ENCODE measurements at regions of chr15 and their contacts with region 1.

Region 1: DNA sequence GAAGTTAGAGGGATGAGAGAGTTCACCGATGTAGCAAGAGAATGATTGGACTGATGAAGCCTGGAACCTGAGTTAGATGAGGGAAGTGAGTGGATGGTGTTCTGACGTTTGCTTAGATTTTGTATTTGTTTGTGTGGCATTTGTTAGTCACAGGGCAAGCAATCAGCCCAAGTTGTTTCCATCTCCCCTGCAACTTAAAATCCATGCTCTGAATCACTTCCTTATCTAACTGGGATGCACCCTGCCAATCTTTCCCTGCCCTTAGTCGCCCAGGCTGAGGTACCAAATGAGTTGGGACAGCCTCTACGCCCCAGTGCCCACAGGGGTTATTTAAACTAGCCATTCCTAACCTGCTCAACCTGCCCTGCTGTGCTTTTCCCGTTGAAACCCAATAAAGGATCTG is 12.6 kb downstream of the PAQR5 start:
- DNase-seq: no peak
- ATAC-seq: no peak
- H3K4me3 ChIP-seq: no peak overlapping the region
- H3K4me3 Mint-ChIP-seq: no peak overlapping the region
- H3K27ac ChIP-seq: no peak overlapping the region
- H3K27ac Mint-ChIP-seq: no peak overlapping the region
- H3K4me1 ChIP-seq: no peaks in the 10 kb centered on the region
- H3K4me1 Mint-ChIP-seq: no peaks in the 10 kb centered on the region
- H3K27me3 ChIP-seq: peaks cover 0 to 27% of the 10 kb centered on the region in 2 experiments
- H3K27me3 Mint-ChIP-seq: peaks cover 19 to 24% of the 10 kb centered on the region in 2 donors

Region 2: DNA sequence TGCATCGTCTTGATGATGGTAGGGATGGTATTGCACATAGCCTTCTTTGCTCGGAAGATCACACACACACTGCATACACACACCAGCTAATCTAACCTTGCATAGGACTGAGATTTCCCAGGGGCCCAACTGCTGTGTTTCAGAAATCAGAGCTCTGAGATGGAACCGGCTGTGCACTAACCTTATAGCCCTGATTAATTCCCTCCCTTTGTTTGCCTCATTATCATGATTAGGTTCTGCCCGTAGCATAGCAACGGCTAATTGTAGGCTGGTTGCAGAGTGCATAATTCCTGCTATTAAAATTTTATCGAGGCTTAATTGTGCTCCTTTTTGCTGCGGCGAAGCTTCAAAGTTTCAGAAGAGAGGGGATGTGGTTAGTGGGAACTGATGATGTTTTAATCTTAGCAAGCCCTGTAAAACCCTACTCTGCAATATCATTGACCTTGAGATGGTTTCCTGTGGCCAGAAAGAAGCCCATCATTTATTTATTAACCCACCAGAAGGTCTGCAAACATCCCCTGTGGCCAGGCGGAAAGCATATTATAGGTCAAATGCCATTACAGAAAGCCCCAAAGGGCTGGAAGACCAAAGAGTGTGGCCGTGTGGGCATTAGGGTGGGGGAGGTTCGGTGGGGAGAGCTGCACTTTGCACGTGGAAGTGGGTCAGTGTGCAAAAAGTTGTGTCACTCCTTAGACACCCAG is 207.1 kb before region 1 on chr15:
- CTCF ChIA-PET with region 1: no interaction called
- POLR2A ChIA-PET with region 1: no interaction called
- DNase-seq: peak in 1 of 35 experiments; percentile 14
- ATAC-seq: peak; percentile 40 to 68 (median 52)
- H3K4me3 ChIP-seq: no peak overlapping the region
- H3K4me3 Mint-ChIP-seq: peak overlapping the region in 1 of 3 donors; percentile 21
- H3K27ac ChIP-seq: no peak overlapping the region
- H3K27ac Mint-ChIP-seq: no peak overlapping the region
- H3K4me1 ChIP-seq: peaks cover 0 to 20% of the 10 kb centered on the region in 2 experiments
- H3K4me1 Mint-ChIP-seq: peaks cover 20 to 43% (median 25%) of the 10 kb centered on the region in 3 donors
- H3K27me3 ChIP-seq: no peaks in the 10 kb centered on the region
- H3K27me3 Mint-ChIP-seq: no peaks in the 10 kb centered on the region

Region 3: GRCh38 chr15:69114331-69114928 is 196.9 kb before region 1 on chr15:
- CTCF ChIA-PET with region 1: no interaction called
- POLR2A ChIA-PET with region 1: no interaction called
- DNase-seq: peak in 1 of 35 experiments; percentile 8
- ATAC-seq: peak in 1 of 4 experiments; percentile 23
- H3K4me3 ChIP-seq: no peak overlapping the region
- H3K4me3 Mint-ChIP-seq: peak overlapping the region in 2 of 3 donors; percentile 1 to 68
- H3K27ac ChIP-seq: no peak overlapping the region
- H3K27ac Mint-ChIP-seq: peak overlapping the region in 1 of 2 donors; percentile 19
- H3K4me1 ChIP-seq: peaks cover 0 to 14% of the 10 kb centered on the region in 2 experiments
- H3K4me1 Mint-ChIP-seq: peaks cover 13 to 16% (median 15%) of the 10 kb centered on the region in 3 donors
- H3K27me3 ChIP-seq: peaks cover 0 to 34% of the 10 kb centered on the region in 2 experiments
- H3K27me3 Mint-ChIP-seq: peaks cover 20 to 28% of the 10 kb centered on the region in 2 donors

Region 4: GRCh38 chr15:69225355-69226025 is 85.8 kb before region 1 on chr15:
- CTCF ChIA-PET with region 1: no interaction called
- POLR2A ChIA-PET with region 1: no interaction called
- DNase-seq: peak in 1 of 35 experiments; percentile 8
- ATAC-seq: no peak
- H3K4me3 ChIP-seq: no peak overlapping the region
- H3K4me3 Mint-ChIP-seq: no peak overlapping the region
- H3K27ac ChIP-seq: no peak overlapping the region
- H3K27ac Mint-ChIP-seq: no peak overlapping the region
- H3K4me1 ChIP-seq: no peaks in the 10 kb centered on the region
- H3K4me1 Mint-ChIP-seq: no peaks in the 10 kb centered on the region
- H3K27me3 ChIP-seq: peaks cover 0 to 2% of the 10 kb centered on the region in 2 experiments
- H3K27me3 Mint-ChIP-seq: no peaks in the 10 kb centered on the region

Region 5: DNA sequence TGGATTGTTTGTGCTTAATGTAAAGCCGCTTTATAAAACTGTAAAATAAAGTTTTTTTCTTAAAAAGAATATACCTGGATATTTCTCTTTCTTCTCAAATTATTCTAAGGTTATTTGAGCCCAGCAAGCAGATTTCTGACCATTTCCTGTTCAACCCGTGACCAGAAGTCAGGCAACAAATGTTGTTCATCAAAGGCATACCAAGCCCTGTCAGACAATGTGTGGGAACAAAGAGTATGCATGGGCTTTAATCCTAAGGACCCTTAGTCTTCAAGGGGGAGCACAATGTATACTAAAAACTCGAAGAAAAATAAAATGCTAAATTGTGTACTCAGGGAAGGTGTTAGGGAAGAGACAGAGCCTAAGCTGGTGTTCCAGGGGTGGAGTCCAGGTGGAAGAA is 39.2 kb before region 1 on chr15:
- CTCF ChIA-PET with region 1: interaction called in 1 of 2 experiments, 10 read pairs
- POLR2A ChIA-PET with region 1: no interaction called
- DNase-seq: no peak
- ATAC-seq: no peak
- H3K4me3 ChIP-seq: no peak overlapping the region
- H3K4me3 Mint-ChIP-seq: no peak overlapping the region
- H3K27ac ChIP-seq: no peak overlapping the region
- H3K27ac Mint-ChIP-seq: no peak overlapping the region
- H3K4me1 ChIP-seq: no peaks in the 10 kb centered on the region
- H3K4me1 Mint-ChIP-seq: no peaks in the 10 kb centered on the region
- H3K27me3 ChIP-seq: no peaks in the 10 kb centered on the region
- H3K27me3 Mint-ChIP-seq: peaks cover 2 to 6% of the 10 kb centered on the region in 2 donors

Region 6: DNA sequence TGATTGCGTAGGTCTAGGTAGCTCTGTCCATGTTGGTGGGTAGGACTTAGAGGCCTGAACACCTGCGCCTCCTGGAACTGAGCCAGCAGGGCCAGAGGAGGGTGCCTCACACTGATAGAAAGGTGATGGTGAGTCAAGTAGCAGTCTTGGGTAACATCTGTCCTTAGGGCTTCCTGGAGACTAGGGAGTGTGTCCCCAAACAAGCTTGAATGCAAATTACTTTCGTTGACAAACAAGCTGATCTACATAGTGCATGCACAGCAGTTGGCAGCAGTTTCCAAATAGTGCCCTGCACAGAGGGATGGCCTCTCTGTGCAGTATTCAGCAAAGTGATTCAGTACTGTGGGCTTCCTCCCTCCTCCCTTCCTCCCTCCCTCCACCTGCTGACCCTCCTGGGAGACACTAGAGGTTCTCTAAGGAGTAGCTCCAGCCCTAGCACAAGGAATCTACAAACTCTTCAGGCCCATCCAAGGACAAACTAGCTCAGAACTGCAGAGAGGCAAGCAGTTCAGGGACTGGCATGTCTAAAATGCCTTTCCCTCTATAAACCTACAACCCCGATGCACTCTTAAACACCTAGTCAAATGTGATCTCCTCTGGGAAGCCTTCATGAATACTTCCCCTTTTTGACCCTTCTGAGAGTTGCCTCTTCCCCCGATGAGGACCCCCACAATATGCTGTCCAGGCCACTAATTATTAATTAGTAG is 725.4 kb after region 1 on chr15:
- CTCF ChIA-PET with region 1: no interaction called
- POLR2A ChIA-PET with region 1: no interaction called
- DNase-seq: no peak
- ATAC-seq: no peak
- H3K4me3 ChIP-seq: no peak overlapping the region
- H3K4me3 Mint-ChIP-seq: no peak overlapping the region
- H3K27ac ChIP-seq: no peak overlapping the region
- H3K27ac Mint-ChIP-seq: no peak overlapping the region
- H3K4me1 ChIP-seq: no peaks in the 10 kb centered on the region
- H3K4me1 Mint-ChIP-seq: no peaks in the 10 kb centered on the region
- H3K27me3 ChIP-seq: peaks cover 0 to 2% of the 10 kb centered on the region in 2 experiments
- H3K27me3 Mint-ChIP-seq: no peaks in the 10 kb centered on the region

Measured in T-cell (primary cell).